Left cardiac atrium (tissue), 4 donors: ENCODE measurements at regions of chr4 and their contacts with region 1.

Region 1: DNA sequence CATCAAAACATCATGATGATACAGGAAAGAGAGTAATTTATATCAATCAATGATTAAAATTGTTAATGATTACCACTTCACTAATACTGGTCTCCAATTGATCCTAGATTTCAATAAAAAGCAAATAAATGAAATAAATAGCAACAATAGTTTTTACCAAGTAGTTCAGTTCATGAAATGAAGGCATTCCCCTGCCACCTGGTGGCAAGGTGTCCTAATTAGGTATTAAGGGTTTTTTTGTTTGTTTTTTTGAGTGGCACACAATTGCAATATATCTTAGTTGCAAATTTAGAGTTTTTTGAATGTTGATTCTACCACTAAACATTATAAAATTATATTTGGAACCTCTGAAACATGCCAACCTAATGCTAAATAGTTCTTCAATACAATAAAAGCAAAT is 157.4 kb upstream of the PDE5A start:
- DNase-seq: peak; percentile 24
- ATAC-seq: no peak

Region 2: DNA sequence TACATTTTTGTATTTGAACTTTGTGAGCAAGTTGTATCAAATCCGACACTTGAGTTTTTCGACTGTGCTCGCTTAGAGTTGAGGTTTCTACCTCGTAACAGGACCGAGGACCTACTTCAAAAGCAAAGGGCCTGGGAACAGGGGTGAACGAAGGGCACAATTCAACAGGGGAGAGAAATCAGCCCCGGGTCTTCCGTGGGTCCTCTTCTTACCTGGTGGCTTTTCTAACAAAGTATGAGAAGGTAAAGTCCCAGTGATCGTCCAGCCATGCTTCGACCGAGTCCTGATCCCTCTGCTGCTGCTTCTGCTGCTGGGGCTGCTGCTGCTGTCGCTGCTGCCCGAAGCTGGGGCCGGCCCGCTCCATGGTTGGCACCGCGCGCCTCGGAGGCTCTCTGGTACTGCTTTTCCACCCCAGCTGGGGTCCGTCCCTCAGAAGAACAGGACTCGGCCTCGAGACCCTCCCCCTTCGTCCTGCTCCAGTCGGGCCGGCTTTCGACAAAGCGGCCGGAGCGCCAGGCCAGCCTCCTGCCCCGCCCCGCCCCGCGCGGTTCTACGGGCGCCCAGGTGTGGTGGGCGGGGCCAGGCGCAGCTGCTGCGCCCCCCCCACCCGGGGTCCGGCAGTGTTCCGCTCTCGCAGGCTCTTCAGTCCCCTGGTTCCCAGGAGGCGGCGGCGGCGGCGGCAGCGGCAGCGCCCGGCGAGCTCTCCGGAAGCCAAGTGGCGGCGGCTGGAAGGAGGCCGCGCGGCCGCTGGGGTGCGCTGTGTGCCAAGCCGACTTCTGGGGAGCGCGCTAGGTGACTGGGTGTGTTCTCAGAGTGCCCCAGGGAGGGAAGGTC is 157.4 kb before region 1 on chr4 and contains the start of gene PDE5A:
- intact Hi-C with region 1: loop called in 1 of 2 experiments (anchors 10 kb)
- DNase-seq: peak; percentile 79
- ATAC-seq: peak; percentile 85 to 91
- total RNA-seq, gene PDE5A: 7.6 to 8.9 TPM

Region 3: DNA sequence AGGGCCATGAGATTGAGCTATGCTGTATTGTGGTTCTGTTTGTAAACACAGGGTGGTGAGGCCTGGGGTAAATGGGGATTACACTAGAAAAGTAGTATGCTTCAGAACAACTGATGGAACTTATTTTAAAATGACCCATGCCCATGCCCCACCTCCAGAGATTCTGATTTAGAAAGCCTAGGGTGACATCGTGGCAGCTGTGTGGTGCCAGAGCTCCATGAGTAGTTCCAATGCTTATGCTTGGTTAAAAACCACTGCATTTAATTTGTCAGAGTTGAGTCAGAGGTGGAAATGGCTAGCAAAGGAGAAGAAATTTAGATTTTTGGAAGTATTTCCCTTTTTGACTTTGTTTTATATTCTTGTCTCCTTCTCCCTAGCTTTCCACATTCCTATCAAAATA is 94.0 kb before region 1 on chr4:
- intact Hi-C with region 1: loop called in 1 of 2 experiments (anchors 5 kb)
- DNase-seq: no peak
- ATAC-seq: peak; percentile 60 to 82

Region 4: DNA sequence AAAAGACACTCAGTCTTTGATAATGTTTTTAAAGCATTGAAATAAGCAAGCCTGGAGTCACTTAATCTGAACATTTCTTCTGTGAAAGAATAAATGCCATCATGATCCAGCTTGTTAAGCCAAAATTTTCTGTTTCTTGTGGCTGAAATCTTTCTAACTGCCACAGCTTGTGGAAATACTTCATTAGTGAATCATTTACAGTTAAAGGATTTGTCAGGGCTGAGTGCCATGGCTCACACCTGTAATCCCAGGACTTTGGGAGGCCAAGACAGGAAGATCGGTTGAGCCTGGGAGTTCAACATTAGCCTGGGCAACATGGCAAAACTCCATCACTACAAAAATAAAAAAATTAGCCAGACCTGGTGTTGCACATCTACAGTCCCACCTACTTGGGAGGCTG is 64.1 kb before region 1 on chr4:
- intact Hi-C with region 1: no loop called
- DNase-seq: no peak
- ATAC-seq: no peak

Region 5: GRCh38 chr4:120175272-120175671 is 389.3 kb after region 1 on chr4:
- intact Hi-C with region 1: no loop called
- DNase-seq: no peak
- ATAC-seq: no peak

Region 6: DNA sequence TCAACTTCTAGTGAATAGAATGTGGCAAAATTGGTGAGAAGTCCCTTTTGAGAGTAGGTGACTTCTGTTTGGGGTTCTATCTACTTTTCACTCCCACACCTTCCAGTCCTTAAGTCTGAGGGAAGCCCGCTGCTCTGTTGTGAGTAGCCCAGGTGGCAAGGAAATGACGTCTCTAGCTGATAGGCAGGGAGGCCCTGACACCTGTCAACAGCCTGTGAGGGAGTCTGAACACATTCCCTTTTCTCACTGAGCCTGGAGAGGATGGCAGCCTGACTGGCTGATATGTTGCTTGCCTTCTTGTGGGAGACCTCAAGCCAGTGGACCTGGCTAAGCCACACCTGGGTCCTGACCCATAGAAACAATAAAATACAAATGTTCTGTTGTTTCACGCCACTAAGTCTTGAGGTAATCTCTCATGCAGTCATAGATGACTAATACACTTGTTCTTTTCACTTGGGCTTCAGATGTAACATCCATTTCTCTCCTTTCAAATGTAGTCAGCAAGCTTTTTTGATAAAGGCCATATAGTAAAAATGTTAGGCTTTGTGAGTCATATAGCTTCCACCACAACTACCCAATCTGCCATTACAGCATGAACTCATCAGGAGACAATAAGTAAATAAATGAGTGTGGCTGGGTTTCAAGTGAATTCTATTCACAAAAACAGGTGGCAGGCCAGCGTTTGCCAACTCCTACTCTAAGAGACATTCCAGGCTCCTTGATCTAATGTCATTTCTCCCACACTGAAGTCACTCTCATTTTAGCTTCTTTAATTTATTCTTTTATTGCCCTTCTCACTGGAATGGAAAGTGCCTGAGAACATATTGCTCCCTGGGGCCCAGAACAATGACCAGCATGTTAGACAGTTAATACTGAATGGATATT is 545.8 kb after region 1 on chr4:
- intact Hi-C with region 1: no loop called
- DNase-seq: no peak
- ATAC-seq: no peak